Activated CD4-positive, alpha-beta T cell treated with anti-CD3 and anti-CD28 coated beads for 36 hours (primary cell): ENCODE measurements at regions of chr20 and their contacts with region 1.

Region 1: GRCh38 chr20:53794529-53795115 is 201.0 kb upstream of the ZNF217 start:
- DNase-seq: no peak
- ATAC-seq: no peak
- H3K4me3 Mint-ChIP-seq: no peak overlapping the region
- H3K27ac Mint-ChIP-seq: no peak overlapping the region
- H3K4me1 Mint-ChIP-seq: peaks cover 16% of the 10 kb centered on the region
- H3K27me3 Mint-ChIP-seq: no peaks in the 10 kb centered on the region

Region 2: DNA sequence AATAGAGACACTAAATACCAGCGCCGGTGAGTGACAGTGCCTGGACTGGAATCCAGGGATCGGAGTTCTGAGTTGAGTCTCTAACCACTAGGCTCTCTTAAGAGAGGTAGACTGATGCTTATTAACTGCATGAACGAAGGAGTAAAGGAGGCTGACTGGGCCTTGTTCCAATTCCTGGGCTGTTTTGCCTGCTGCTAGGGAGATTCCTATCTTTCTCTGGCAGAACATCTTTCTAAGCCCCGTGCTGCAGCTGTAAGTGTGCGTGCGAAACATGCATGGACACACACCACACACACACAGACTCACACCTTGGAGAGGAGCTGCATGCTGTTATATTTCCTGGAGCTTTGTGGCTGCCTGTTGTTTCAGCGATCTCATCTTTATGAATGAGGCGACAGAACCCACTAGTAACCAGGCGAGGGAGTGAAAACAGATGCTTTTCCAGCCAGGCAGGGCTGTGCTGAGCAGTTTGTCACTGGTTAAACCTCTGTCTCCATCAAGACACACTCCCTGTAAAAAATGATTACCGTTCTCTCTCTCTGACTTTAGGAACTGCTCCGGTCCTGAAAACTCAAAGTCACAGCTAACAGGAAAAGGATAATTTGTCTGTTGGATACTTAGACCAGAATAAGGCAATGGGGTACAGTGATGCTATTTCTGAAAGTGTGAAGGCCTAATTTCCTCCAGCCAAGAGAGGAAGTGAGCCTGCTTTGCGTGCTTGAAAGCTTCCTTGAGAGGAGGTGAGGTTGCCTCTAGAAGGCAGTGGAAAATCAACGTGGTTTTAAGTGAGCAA is 43.6 kb before region 1 on chr20:
- CTCF ChIA-PET with region 1: no interaction called
- POLR2A ChIA-PET with region 1: no interaction called
- intact Hi-C with region 1: loop called in 1 of 2 experiments (anchors 5 kb)
- DNase-seq: peak; percentile 60
- ATAC-seq: peak; percentile 70
- H3K4me3 Mint-ChIP-seq: peak overlapping the region; percentile 22
- H3K27ac Mint-ChIP-seq: peak overlapping the region; percentile 96
- H3K4me1 Mint-ChIP-seq: peaks cover 73% of the 10 kb centered on the region
- H3K27me3 Mint-ChIP-seq: no peaks in the 10 kb centered on the region

Region 3: GRCh38 chr20:53857723-53858236 is 63.2 kb after region 1 on chr20:
- CTCF ChIA-PET with region 1: no interaction called
- POLR2A ChIA-PET with region 1: no interaction called
- intact Hi-C with region 1: no loop called
- DNase-seq: no peak
- ATAC-seq: no peak
- H3K4me3 Mint-ChIP-seq: no peak overlapping the region
- H3K27ac Mint-ChIP-seq: no peak overlapping the region
- H3K4me1 Mint-ChIP-seq: peaks cover 21% of the 10 kb centered on the region
- H3K27me3 Mint-ChIP-seq: no peaks in the 10 kb centered on the region